Mammary epithelial cell (primary cell): ENCODE measurements at regions of chr3 and their contacts with region 1.

Region 1: DNA sequence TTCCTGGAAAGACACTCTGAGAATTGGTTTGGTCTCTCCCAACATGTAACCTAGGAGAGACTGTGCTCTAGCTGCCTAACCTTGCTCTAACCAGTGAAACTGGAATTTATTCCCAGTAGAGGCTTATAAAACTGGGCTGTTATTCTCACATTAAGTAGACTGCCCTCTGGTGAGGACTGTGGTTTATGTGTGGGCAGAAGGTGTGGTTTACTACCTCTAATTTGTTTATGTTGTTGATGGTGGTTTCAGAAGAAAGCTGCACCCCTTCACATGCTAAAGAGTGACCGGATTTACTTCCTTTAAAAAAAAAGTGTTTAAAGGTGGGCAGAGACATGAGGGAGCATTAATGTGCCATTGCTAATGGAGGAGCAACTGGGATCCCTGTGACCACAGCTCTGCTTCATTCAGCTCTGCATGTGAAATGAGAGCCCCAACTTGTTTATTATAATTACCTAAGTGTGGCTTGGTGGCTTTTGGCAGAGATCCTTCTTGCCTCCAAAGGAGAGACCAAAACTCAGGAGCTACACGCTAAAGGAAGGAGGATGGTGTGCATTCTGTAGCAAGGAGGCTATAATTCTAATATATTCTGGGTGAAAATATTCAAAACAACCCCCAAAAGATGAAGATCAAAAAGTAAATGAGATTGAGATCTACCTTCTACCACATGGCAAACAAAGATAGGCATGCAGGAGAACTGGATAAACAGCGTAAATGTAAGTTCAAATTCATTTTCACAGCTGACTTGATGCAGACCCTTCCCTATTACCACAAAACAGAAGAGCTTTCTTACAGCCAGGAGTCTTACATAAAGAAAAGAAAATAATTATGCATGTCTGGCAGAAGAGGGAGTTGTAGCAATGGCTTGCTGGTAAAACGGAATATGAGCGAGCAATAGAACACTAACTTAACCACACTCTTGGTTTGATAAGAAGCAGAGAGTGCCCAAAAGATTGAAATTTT is 273.0 kb downstream of the MECOM start:
- DNase-seq: peak; percentile 49
- H3K4me3 ChIP-seq: no peak overlapping the region
- H3K27ac ChIP-seq: no peak overlapping the region
- H3K4me1 ChIP-seq: no peaks in the 10 kb centered on the region
- H3K27me3 ChIP-seq: no peaks in the 10 kb centered on the region
- CTCF ChIP-seq: peak; percentile 18 to 57

Region 2: GRCh38 chr3:169264711-169265110 is 125.8 kb before region 1 on chr3:
- CTCF ChIA-PET with region 1: no interaction called
- dilution Hi-C with region 1: no loop called
- in situ Hi-C with region 1: no loop called
- intact Hi-C with region 1: no loop called
- DNase-seq: peak; percentile 54
- H3K4me3 ChIP-seq: no peak overlapping the region
- H3K27ac ChIP-seq: no peak overlapping the region
- H3K4me1 ChIP-seq: no peaks in the 10 kb centered on the region
- H3K27me3 ChIP-seq: no peaks in the 10 kb centered on the region
- CTCF ChIP-seq: no peak

Region 3: GRCh38 chr3:169604568-169604967 is 214.0 kb after region 1 on chr3:
- CTCF ChIA-PET with region 1: interaction called, 3 read pairs
- dilution Hi-C with region 1: no loop called
- in situ Hi-C with region 1: no loop called
- intact Hi-C with region 1: loop called (anchors 2 kb)
- DNase-seq: peak; percentile 4
- H3K4me3 ChIP-seq: no peak overlapping the region
- H3K27ac ChIP-seq: no peak overlapping the region
- H3K4me1 ChIP-seq: no peaks in the 10 kb centered on the region
- H3K27me3 ChIP-seq: peaks cover 2% of the 10 kb centered on the region
- CTCF ChIP-seq: peak; percentile 15 to 48

Region 4: GRCh38 chr3:169668957-169669681 is 278.6 kb after region 1 on chr3:
- CTCF ChIA-PET with region 1: interaction called, 3 read pairs
- dilution Hi-C with region 1: no loop called
- in situ Hi-C with region 1: no loop called
- intact Hi-C with region 1: loop called (anchors 1 kb)
- DNase-seq: peak; percentile 67
- H3K4me3 ChIP-seq: peak overlapping the region; percentile 41 to 46 (median 43)
- H3K27ac ChIP-seq: no peak overlapping the region
- H3K4me1 ChIP-seq: peaks cover 12% of the 10 kb centered on the region
- H3K27me3 ChIP-seq: peaks cover 50% of the 10 kb centered on the region
- CTCF ChIP-seq: peak; percentile 37 to 88